ENCODE measurements at regions of chr19 and their contacts with region 1.

Region 1: GRCh38 chr19:53906211-53907192 is 2.6 kb upstream of the CACNG7 start:
- DNase-seq: peak; percentile 33 to 78 (median 55)
- ATAC-seq: peak; percentile 80
- H3K4me3 ChIP-seq: no peak overlapping the region
- H3K4me3 Mint-ChIP-seq: peak overlapping the region in 6 of 10 donors; percentile 26 to 87 (median 63)
- H3K27ac ChIP-seq: no peak overlapping the region
- H3K27ac Mint-ChIP-seq: peak overlapping the region in 1 of 9 donors; percentile 10
- H3K4me1 ChIP-seq: peaks cover 5 to 13% of the 10 kb centered on the region in 2 donors
- H3K4me1 Mint-ChIP-seq: peaks cover 21 to 34% (median 28%) of the 10 kb centered on the region in 7 donors
- H3K27me3 ChIP-seq: peaks cover 3 to 34% of the 10 kb centered on the region in 2 donors
- H3K27me3 Mint-ChIP-seq: peaks cover 60 to 91% (median 78%) of the 10 kb centered on the region in 5 donors

Region 2: DNA sequence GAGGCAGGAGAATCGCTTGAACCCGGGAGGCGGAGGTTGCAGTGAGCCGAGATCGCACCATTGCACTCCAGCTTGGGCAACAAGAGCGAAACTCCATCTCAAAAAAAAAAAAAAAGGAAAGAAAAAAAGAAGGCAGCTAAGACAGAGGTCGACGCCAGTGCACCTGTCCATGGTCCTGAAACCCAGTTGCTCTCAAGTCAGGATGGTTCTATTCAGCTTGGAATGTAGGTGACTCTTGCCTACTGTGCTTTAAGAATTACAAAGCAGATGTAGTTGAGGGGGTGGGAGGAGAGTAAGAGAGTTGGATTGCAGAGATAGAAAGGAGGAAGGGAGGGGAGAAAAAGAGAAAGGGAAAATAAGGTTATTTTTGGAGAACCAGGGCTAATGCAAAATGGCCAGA is 21.2 kb after region 1 on chr19:
- CTCF ChIA-PET with region 1: no interaction called
- POLR2A ChIA-PET with region 1: no interaction called
- intact Hi-C with region 1: loop called in 1 of 2 experiments (anchors 2 kb)
- DNase-seq: peak in 6 of 9 donors; percentile 13 to 51 (median 30)
- ATAC-seq: no peak
- H3K4me3 ChIP-seq: no peak overlapping the region
- H3K4me3 Mint-ChIP-seq: no peak overlapping the region
- H3K27ac ChIP-seq: no peak overlapping the region
- H3K27ac Mint-ChIP-seq: peak overlapping the region in 1 of 9 donors; percentile 28
- H3K4me1 ChIP-seq: no peaks in the 10 kb centered on the region
- H3K4me1 Mint-ChIP-seq: no peaks in the 10 kb centered on the region
- H3K27me3 ChIP-seq: no peaks in the 10 kb centered on the region
- H3K27me3 Mint-ChIP-seq: peaks cover 0 to 9% (median 5%) of the 10 kb centered on the region in 5 donors

Region 3: GRCh38 chr19:53961523-53962356 is 55.2 kb after region 1 on chr19:
- CTCF ChIA-PET with region 1: no interaction called
- POLR2A ChIA-PET with region 1: no interaction called
- intact Hi-C with region 1: no loop called
- DNase-seq: no peak
- ATAC-seq: no peak
- H3K4me3 ChIP-seq: no peak overlapping the region
- H3K4me3 Mint-ChIP-seq: peak overlapping the region in 1 of 10 donors; percentile 3
- H3K27ac ChIP-seq: no peak overlapping the region
- H3K27ac Mint-ChIP-seq: no peak overlapping the region
- H3K4me1 ChIP-seq: no peaks in the 10 kb centered on the region
- H3K4me1 Mint-ChIP-seq: peaks cover 2 to 27% (median 12%) of the 10 kb centered on the region in 7 donors
- H3K27me3 ChIP-seq: peaks cover 0 to 10% of the 10 kb centered on the region in 2 donors
- H3K27me3 Mint-ChIP-seq: peaks cover 76 to 86% (median 81%) of the 10 kb centered on the region in 5 donors

Region 4: DNA sequence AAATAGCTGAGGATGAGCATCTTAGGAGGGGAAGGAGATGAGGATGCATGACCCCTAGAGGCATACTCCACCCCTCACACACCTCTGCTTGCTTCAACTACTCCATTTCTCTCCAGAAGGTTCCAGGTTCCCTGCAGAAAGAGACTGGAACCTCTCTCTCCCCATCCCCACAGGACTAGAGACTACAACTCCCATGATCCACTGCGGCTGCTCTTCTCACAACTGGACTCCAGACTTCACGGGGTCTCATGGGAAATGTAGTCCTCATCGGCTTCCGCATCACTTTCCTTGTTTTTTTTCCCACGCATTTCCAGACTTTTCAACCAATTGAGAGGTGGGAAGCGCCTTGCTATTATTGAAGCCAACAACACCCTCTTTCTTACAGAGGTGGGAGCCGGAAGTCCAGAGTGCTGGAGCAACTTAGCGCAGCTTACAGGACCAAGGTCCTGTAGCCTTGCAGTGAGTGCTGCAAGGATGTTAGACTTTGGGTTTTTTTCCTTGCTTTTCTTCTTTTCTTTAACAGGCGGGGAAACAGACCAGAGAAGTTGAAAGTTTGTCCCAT is 71.0 kb after region 1 on chr19:
- CTCF ChIA-PET with region 1: no interaction called
- POLR2A ChIA-PET with region 1: no interaction called
- intact Hi-C with region 1: loop called (anchors 5 to 10 kb)
- DNase-seq: peak; percentile 34 to 69 (median 59)
- ATAC-seq: peak; percentile 83
- H3K4me3 ChIP-seq: peak overlapping the region; percentile 42
- H3K4me3 Mint-ChIP-seq: peak overlapping the region; percentile 73 to 90 (median 83)
- H3K27ac ChIP-seq: no peak overlapping the region
- H3K27ac Mint-ChIP-seq: peak overlapping the region in 2 of 9 donors; percentile 21 to 50
- H3K4me1 ChIP-seq: peaks cover 0 to 5% of the 10 kb centered on the region in 2 donors
- H3K4me1 Mint-ChIP-seq: peaks cover 14 to 41% (median 30%) of the 10 kb centered on the region in 7 donors
- H3K27me3 ChIP-seq: peaks cover 6 to 16% of the 10 kb centered on the region in 2 donors
- H3K27me3 Mint-ChIP-seq: peaks cover 48 to 70% (median 61%) of the 10 kb centered on the region in 5 donors

Measured in naive thymus-derived CD4-positive, alpha-beta T cell (primary cell).